ENCODE measurements at regions of chr19 and their contacts with region 1.

Region 1: DNA sequence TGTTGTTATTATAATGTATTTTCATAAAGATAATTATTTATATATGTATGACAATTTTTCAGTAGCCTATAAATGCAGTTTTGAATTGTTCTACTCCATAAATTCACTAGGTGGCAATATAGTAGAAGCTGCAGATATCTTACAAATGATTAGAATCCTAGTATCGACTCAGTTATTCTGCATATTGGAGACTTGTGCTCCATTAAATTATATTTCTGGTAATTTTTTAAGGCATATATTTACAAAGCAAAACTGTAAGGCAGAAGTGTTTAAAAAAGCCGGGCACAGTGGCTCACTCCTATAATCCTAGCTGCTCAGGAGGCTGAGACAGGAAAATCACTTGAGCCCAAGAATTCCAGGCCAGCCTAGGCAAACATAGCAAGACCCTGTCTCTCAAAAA is 58.7 kb downstream of the DPY19L3 start:
- H3K4me3 ChIP-seq: no peak overlapping the region
- H3K27ac ChIP-seq: no peak overlapping the region
- H3K4me1 ChIP-seq: no peaks in the 10 kb centered on the region
- CTCF ChIP-seq: no peak

Region 2: GRCh38 chr19:32392901-32393300 is 71.4 kb before region 1 on chr19:
- CTCF ChIA-PET with region 1: no interaction called
- POLR2A ChIA-PET with region 1: no interaction called
- H3K4me3 ChIP-seq: no peak overlapping the region
- H3K27ac ChIP-seq: no peak overlapping the region
- H3K4me1 ChIP-seq: peaks cover 9% of the 10 kb centered on the region
- CTCF ChIP-seq: no peak

Region 3: DNA sequence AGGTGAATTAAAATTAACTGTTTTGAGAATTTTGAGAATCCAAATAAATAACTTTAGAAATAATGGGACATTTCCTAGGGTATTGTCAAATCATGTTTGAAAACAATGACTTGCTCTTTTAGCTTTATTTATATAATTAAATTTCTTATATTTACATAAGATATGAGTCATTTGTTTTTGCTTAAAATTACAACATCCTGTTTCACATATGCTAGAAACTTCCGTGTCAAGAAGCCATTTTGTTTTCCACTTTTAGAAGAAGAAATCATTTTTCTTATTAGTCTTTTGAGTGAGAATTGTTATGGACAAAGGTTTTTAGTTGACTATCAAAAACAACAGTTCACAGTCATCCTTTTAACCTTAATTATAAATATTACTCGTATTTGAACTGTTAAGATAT is 10.5 kb before region 1 on chr19:
- CTCF ChIA-PET with region 1: interaction called, 18 read pairs
- POLR2A ChIA-PET with region 1: no interaction called
- H3K4me3 ChIP-seq: no peak overlapping the region
- H3K27ac ChIP-seq: no peak overlapping the region
- H3K4me1 ChIP-seq: no peaks in the 10 kb centered on the region
- CTCF ChIP-seq: no peak

Region 4: GRCh38 chr19:32475141-32476031 is 11.1 kb after region 1 on chr19:
- CTCF ChIA-PET with region 1: interaction called, 25 read pairs
- POLR2A ChIA-PET with region 1: no interaction called
- H3K4me3 ChIP-seq: no peak overlapping the region
- H3K27ac ChIP-seq: no peak overlapping the region
- H3K4me1 ChIP-seq: peaks cover 3% of the 10 kb centered on the region; the same call in 1 of the 2 replicates
- CTCF ChIP-seq: no peak

Region 5: DNA sequence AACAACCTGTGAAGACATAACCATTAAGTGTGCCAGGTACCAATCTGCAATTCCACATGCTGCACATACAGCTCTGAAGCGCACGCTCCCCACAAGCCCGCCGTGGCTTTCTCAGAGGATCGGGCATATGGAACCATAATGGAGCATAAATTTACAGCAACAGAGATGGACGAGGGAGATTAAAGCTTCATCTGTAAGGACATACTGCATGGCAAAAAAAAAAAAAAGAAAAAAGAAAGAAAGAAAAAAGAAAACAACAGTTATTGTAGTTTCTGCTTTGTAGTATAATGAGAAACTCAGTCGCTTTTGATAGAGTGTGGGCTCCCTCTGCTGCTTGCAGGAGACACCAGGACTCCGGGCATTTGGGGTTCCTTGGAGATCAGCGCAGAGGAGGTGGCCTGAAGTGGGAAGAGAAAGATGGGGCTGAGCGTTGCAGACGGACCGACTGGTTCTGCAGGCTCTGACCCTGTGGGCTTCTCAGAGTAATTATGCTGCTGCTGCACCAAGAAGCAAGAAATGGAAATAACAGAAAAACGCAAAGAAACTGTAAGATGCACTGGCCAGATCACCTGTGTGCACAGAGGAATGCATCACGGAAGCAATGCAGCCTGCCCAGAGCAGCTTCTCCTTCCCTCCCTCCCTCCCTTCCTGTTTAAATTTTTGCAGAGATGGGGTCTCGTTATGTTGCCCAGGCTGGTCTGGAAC is 106.0 kb after region 1 on chr19:
- CTCF ChIA-PET with region 1: interaction called, 46 read pairs
- POLR2A ChIA-PET with region 1: no interaction called
- H3K4me3 ChIP-seq: no peak overlapping the region
- H3K27ac ChIP-seq: no peak overlapping the region
- H3K4me1 ChIP-seq: peaks cover 2% of the 10 kb centered on the region; the same call in 1 of the 2 replicates
- CTCF ChIP-seq: peak; percentile 98

Measured in HEK293 (cell line).